Right lobe of liver (tissue), 6 donors: ENCODE measurements at regions of chr14 and their contacts with region 1.

Region 1: GRCh38 chr14:68795597-68796417 is 2.9 kb upstream of the ZFP36L1 start:
- DNase-seq: peak; percentile 89 to 90 (median 90)
- ATAC-seq: peak; percentile 45 to 70 (median 56)
- H3K4me3 ChIP-seq: peak overlapping the region; percentile 90 to 95 (median 93)
- H3K27ac ChIP-seq: peak overlapping the region; percentile 100
- H3K4me1 ChIP-seq: peaks cover 0 to 6% (median 3%) of the 10 kb centered on the region in 4 donors
- H3K27me3 ChIP-seq: no peaks in the 10 kb centered on the region
- CTCF ChIP-seq: peak; percentile 69 to 93 (median 74)
- POLR2A ChIP-seq: peak; percentile 98

Region 2: GRCh38 chr14:68816262-68816942 is 20.6 kb after region 1 on chr14:
- intact Hi-C with region 1: loop called in 1 of 2 experiments (anchors 2 kb)
- DNase-seq: peak; percentile 92 to 94 (median 93)
- ATAC-seq: peak; percentile 70 to 87 (median 76)
- H3K4me3 ChIP-seq: peak overlapping the region; percentile 55 to 66 (median 65)
- H3K27ac ChIP-seq: peak overlapping the region; percentile 98 to 100 (median 100)
- H3K4me1 ChIP-seq: peaks cover 0 to 66% (median 29%) of the 10 kb centered on the region in 4 donors
- H3K27me3 ChIP-seq: no peaks in the 10 kb centered on the region
- CTCF ChIP-seq: peak; percentile 95 to 99 (median 96)
- POLR2A ChIP-seq: peak; percentile 85